A673 (cell line): ENCODE measurements at regions of chr10 and their contacts with region 1.

Region 1: GRCh38 chr10:100518761-100519241 is 860 bp downstream of the SEC31B start:
- DNase-seq: peak; percentile 81
- H3K4me3 ChIP-seq: peak overlapping the region; percentile 50
- H3K27ac ChIP-seq: no peak overlapping the region
- H3K4me1 ChIP-seq: peaks cover 7% of the 10 kb centered on the region
- H3K27me3 ChIP-seq: no peaks in the 10 kb centered on the region
- CTCF ChIP-seq: peak; percentile 85

Region 2: DNA sequence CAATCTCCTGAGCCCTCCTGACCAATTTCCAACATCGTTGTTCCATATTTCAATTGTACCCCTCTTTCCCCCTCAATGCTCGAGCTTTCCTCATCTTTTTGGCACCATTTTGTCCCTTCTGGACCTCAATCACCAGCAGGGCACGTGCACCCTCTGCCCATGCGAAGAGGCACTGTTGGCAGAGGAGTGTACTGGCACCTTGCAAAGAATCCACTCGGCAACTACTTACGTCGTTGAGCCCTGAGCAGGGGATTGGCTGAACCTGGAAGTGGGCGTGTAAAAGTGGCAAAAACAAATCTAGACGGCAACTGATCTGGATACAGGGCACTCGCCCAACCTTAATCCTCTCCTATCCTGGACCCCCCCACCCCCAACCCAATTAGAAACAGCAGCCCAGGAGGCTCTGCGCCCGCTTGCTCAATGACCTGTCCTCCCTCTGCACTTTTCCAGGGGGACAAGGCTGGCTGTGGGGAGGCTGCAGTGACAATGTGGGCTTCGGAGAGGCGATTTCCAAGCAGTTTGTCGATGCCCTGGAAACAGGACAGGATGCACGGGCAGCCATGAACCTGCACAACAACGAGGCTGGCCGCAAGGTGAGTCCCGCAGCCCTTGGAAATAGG is 37.2 kb before region 1 on chr10:
- CTCF ChIA-PET with region 1: interaction called, 11 read pairs
- POLR2A ChIA-PET with region 1: no interaction called
- intact Hi-C with region 1: no loop called
- DNase-seq: peak; percentile 91
- H3K4me3 ChIP-seq: peak overlapping the region; percentile 49
- H3K27ac ChIP-seq: no peak overlapping the region
- H3K4me1 ChIP-seq: peaks cover 4% of the 10 kb centered on the region
- H3K27me3 ChIP-seq: peaks cover 42% of the 10 kb centered on the region
- CTCF ChIP-seq: no peak

Region 3: DNA sequence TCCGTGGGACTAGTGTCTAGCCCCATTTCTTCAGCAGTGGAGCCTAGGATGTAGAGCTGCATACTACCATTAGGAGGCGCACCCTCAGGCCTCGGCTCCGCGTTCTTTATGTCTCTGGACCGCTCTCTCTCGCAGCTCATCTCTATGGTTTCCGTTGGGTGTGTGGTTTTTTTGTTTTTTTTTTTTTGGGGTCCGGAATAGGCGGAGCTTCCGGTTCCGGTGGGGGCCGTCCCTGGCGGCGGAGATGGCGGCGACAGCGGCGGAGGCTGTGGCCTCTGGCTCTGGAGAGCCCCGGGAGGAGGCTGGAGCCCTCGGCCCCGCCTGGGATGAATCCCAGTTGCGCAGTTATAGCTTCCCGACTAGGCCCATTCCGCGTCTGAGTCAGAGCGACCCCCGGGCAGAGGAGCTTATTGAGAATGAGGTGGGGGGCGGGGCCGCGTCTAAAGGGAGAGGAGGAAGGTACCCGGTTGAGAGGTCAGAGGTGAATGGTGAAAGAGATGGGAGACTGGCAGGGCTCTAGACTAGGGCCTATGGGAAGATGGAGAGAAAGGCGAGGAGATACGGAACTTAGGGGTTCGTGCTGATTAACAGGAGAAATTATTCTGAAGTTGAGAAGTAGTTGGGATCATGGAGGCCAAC is 17.0 kb after region 1 on chr10 and contains the start of gene HIF1AN:
- CTCF ChIA-PET with region 1: interaction called, 18 read pairs
- POLR2A ChIA-PET with region 1: interaction called, 7 read pairs
- intact Hi-C with region 1: no loop called
- DNase-seq: peak; percentile 98
- H3K4me3 ChIP-seq: peak within 1 kb of the TSS; percentile 89
- H3K27ac ChIP-seq: peak within 1 kb of the TSS; percentile 49
- H3K4me1 ChIP-seq: peaks cover 13% of the 10 kb centered on the region
- H3K27me3 ChIP-seq: no peaks in the 10 kb centered on the region
- CTCF ChIP-seq: peak; percentile 99
- total RNA-seq, gene HIF1AN: 49.0 and 57.6 TPM in 2 replicates